Mammary epithelial cell (primary cell): ENCODE measurements at regions of chr11 and their contacts with region 1.

Region 1: GRCh38 chr11:57345555-57346211 is 7.5 kb downstream of the P2RX3 start:
- DNase-seq: peak; percentile 60
- H3K4me3 ChIP-seq: no peak overlapping the region
- H3K27ac ChIP-seq: no peak overlapping the region
- H3K4me1 ChIP-seq: no peaks in the 10 kb centered on the region
- H3K27me3 ChIP-seq: no peaks in the 10 kb centered on the region
- CTCF ChIP-seq: peak; percentile 57 to 69

Region 2: GRCh38 chr11:57269571-57270021 is 76.1 kb before region 1 on chr11:
- CTCF ChIA-PET with region 1: no interaction called
- dilution Hi-C with region 1: no loop called
- in situ Hi-C with region 1: no loop called
- intact Hi-C with region 1: no loop called
- DNase-seq: no peak
- H3K4me3 ChIP-seq: no peak overlapping the region
- H3K27ac ChIP-seq: no peak overlapping the region
- H3K4me1 ChIP-seq: no peaks in the 10 kb centered on the region
- H3K27me3 ChIP-seq: no peaks in the 10 kb centered on the region
- CTCF ChIP-seq: no peak

Region 3: DNA sequence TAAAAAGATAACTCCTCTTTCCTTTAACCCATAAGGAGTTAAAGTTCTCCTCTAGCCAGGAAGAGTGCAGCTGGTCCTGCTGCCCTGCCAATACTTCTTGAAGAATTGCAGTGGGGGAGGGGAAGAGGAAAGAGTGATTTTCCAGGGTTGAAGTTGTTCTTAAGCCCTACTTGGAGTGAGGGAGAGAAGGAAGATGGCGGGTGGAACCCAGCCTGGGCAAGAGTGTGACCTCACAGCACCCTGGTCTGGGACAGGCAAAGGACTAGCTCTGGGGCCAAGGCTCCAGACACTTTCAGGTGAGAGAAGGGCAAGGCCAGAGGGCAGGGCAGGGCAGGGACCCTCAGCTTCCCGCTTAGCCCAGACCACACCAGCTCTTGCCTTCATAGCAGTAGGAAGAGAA is 27.5 kb before region 1 on chr11:
- CTCF ChIA-PET with region 1: no interaction called
- dilution Hi-C with region 1: no loop called
- in situ Hi-C with region 1: no loop called
- intact Hi-C with region 1: no loop called
- DNase-seq: no peak
- H3K4me3 ChIP-seq: no peak overlapping the region
- H3K27ac ChIP-seq: no peak overlapping the region
- H3K4me1 ChIP-seq: peaks cover 29% of the 10 kb centered on the region
- H3K27me3 ChIP-seq: no peaks in the 10 kb centered on the region
- CTCF ChIP-seq: no peak

Region 4: DNA sequence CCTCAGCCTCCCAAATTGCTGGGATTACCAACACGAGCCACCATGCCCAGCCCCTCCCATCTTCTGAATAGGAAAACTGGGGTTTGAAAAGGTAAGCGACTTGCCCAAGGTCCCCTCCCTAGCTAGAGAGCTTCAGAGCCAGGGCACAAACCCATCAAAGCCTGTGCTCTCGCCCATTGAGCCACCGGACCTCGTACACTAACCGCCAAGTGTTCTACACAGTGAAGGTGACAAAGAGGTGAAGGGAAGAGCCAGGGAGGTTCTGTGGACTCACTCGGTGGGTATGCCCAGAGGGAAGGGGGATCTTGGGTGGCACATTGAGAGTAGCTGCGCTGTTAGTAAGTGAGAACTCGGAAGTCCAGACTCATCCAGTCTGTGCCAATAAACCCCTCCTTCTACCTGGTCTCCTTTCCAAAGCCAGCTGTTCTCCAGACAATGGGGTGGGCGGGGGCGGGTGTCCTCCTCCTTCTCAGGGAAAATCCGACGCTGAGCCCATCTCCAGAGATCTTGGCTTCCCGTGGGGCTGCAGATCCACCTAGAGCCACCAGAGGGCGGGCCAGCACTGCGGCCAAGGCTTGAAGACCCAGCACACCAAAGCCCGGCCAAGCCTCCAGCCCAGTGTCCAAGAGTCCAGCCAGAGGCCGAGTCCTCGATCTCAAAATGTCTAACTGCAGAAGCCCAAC is 111.4 kb after region 1 on chr11:
- CTCF ChIA-PET with region 1: interaction called, 3 read pairs
- dilution Hi-C with region 1: no loop called
- in situ Hi-C with region 1: loop called in 1 of 2 experiments (anchors 10 kb)
- intact Hi-C with region 1: loop called (anchors 1 kb)
- DNase-seq: peak; percentile 68
- H3K4me3 ChIP-seq: no peak overlapping the region
- H3K27ac ChIP-seq: no peak overlapping the region
- H3K4me1 ChIP-seq: peaks cover 20% of the 10 kb centered on the region
- H3K27me3 ChIP-seq: peaks cover 16% of the 10 kb centered on the region
- CTCF ChIP-seq: peak; percentile 94 to 99

Region 5: GRCh38 chr11:57567515-57568329 is 222.0 kb after region 1 on chr11 and contains the start of gene UBE2L6:
- CTCF ChIA-PET with region 1: no interaction called
- dilution Hi-C with region 1: no loop called
- in situ Hi-C with region 1: no loop called
- intact Hi-C with region 1: loop called (anchors 1 kb)
- DNase-seq: no peak
- H3K4me3 ChIP-seq: peak within 1 kb of the TSS; percentile 77 to 96 (median 90)
- H3K27ac ChIP-seq: peak within 1 kb of the TSS; percentile 44
- H3K4me1 ChIP-seq: peaks cover 27% of the 10 kb centered on the region
- H3K27me3 ChIP-seq: no peaks in the 10 kb centered on the region
- CTCF ChIP-seq: no peak
- total RNA-seq, gene UBE2L6: 34.2 to 46.8 TPM

Region 6: DNA sequence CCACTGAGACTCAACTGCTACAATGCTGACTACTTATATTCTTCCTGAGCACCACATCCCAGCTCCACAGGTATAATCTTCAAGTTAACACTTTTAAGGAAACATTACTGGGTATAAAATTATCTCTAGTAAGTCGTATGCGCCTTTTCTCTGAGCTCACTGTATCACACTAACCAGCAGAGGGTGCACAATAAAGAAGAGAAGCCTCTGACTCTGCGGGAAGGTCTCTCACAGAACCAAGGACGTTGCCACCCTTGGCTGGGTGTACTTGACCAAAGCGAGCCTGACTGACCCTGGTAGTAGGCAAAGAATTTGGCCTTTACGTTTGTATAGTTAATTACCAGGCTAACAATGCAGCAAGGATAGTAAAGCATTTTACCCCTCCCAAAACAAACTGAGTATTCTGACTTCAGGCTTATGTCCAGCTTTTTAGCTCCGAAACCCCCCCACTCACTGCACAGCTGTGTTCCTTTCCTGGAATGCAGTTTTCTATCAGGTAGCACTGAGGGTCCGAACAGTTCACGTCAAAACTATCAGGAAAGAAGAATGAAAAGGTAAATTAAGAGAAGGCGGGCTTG is 406.1 kb after region 1 on chr11 and contains the start of gene BTBD18:
- CTCF ChIA-PET with region 1: no interaction called
- dilution Hi-C with region 1: no loop called
- in situ Hi-C with region 1: no loop called
- intact Hi-C with region 1: loop called (anchors 5 kb)
- DNase-seq: peak; percentile 49
- H3K4me3 ChIP-seq: no peak within 1 kb of the TSS
- H3K27ac ChIP-seq: no peak within 1 kb of the TSS
- H3K4me1 ChIP-seq: no peaks in the 10 kb centered on the region
- H3K27me3 ChIP-seq: no peaks in the 10 kb centered on the region
- CTCF ChIP-seq: peak; percentile 55 to 63
- total RNA-seq, gene BTBD18: not detected

Region 7: GRCh38 chr11:59135648-59136461 is 1790.2 kb after region 1 on chr11:
- CTCF ChIA-PET with region 1: no interaction called
- dilution Hi-C with region 1: no loop called
- in situ Hi-C with region 1: no loop called
- intact Hi-C with region 1: loop called (anchors 10 kb)
- DNase-seq: peak; percentile 36
- H3K4me3 ChIP-seq: no peak overlapping the region
- H3K27ac ChIP-seq: no peak overlapping the region
- H3K4me1 ChIP-seq: peaks cover 6% of the 10 kb centered on the region
- H3K27me3 ChIP-seq: no peaks in the 10 kb centered on the region
- CTCF ChIP-seq: peak; percentile 99 to 100